ENCODE measurements at regions of chr5 and their contacts with region 1.

Region 1: DNA sequence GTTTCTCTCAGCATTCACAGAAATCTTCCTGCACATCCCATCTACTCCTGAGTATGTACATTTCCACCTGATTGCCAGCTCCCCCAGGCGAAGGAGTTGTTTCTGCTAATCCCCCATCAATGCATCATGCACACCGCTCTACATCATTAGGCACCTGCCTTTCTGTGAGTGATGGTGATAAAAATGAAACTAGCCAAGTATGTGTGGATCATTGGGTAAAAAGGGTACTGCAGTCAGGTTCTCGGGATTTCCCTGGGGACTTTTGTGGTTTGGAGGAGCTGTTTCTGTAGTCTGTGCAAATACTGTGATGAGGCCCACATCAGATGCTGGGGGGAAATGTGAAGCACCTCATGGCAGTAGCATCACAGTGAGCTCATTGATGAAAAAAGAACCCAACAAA is 30.4 kb downstream of the CAMK4 start:
- DNase-seq: peak; percentile 53
- ATAC-seq: peak; percentile 73
- H3K4me3 Mint-ChIP-seq: peak overlapping the region; percentile 36
- H3K27ac Mint-ChIP-seq: peak overlapping the region; percentile 76
- H3K4me1 Mint-ChIP-seq: peaks cover 66% of the 10 kb centered on the region
- H3K27me3 Mint-ChIP-seq: no peaks in the 10 kb centered on the region

Region 2: GRCh38 chr5:111158105-111158744 is 96.4 kb before region 1 on chr5:
- CTCF ChIA-PET with region 1: interaction called, 11 read pairs
- POLR2A ChIA-PET with region 1: no interaction called
- DNase-seq: peak; percentile 86
- ATAC-seq: peak; percentile 72
- H3K4me3 Mint-ChIP-seq: no peak overlapping the region
- H3K27ac Mint-ChIP-seq: no peak overlapping the region
- H3K4me1 Mint-ChIP-seq: peaks cover 2% of the 10 kb centered on the region
- H3K27me3 Mint-ChIP-seq: no peaks in the 10 kb centered on the region

Region 3: DNA sequence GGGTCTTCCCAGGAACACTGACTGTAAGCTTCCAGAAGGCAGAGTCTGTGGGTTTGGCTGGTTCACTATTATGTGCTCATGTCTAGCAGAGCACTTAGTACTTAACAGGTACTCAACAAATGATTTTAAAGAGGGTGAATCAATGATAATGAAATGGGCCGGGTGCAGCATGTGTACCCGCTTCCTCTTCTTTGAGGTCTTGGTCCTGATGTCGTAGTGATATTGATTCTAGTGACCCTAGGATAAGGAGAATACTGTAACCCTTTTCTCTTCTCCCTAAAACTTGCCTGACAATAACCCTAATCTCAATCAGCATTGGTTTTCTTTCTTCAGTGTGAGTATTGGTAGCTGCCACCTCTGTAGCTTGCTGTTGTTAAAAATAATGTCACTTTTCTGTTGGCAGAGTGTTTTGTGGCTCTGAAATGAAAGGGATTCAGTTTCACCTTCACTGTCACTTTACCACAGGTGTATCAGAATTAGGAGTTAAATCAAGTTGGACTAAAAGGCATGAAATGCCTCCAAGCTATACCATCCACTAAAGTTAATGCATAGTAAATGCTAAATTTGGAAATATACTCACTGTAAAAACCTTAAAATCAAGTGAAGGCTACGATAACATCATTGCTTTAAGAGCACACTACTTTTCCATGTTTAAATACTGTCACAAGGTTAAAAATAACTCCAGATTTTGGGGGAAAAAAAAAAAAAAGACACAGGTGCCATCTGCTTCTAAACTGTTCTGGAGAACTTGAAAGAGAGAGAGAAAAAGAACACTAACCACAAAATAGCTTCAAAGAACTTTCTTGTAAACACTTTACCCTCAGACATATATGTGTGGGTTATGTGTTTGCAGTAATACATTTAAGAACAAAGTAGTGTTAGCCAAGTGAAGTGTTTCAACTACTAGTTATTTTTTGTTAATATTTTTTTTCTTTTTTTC is 24.5 kb before region 1 on chr5:
- CTCF ChIA-PET with region 1: interaction called, 41 read pairs
- POLR2A ChIA-PET with region 1: interaction called, 45 read pairs
- DNase-seq: no peak
- ATAC-seq: peak; percentile 38
- H3K4me3 Mint-ChIP-seq: peak overlapping the region; percentile 79
- H3K27ac Mint-ChIP-seq: peak overlapping the region; percentile 98
- H3K4me1 Mint-ChIP-seq: peaks cover 66% of the 10 kb centered on the region
- H3K27me3 Mint-ChIP-seq: no peaks in the 10 kb centered on the region

Region 4: DNA sequence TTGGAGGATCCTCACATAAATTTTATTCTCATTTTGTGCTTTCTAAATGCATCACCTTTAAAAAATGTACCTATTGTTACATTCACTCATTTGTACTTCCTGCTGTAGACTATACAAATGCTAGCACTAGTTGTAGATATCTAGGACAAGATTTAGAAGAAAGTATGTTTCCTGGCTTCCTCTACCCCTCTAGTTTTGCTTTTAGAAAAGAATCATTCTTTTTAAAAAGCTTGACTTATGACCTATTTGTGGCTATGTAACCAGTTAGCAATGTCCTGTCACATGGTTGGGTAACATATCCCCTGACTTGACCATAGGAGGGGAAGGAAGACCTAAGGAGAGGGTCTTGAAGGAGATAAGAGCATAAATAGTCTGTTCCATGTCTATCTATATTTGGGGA is 17.1 kb before region 1 on chr5:
- CTCF ChIA-PET with region 1: interaction called, 31 read pairs
- POLR2A ChIA-PET with region 1: interaction called, 20 read pairs
- DNase-seq: no peak
- ATAC-seq: peak; percentile 17
- H3K4me3 Mint-ChIP-seq: peak overlapping the region; percentile 72
- H3K27ac Mint-ChIP-seq: peak overlapping the region; percentile 91
- H3K4me1 Mint-ChIP-seq: peaks cover 80% of the 10 kb centered on the region
- H3K27me3 Mint-ChIP-seq: no peaks in the 10 kb centered on the region

Measured in activated CD8-positive, alpha-beta T cell treated with anti-CD3 and anti-CD28 coated beads, Interleukin-2, amount 10 ng/mL, durations not matched to agents 7 days and 5 days (primary cell).